ENCODE measurements at regions of chr12 and their contacts with region 1.

Region 1: DNA sequence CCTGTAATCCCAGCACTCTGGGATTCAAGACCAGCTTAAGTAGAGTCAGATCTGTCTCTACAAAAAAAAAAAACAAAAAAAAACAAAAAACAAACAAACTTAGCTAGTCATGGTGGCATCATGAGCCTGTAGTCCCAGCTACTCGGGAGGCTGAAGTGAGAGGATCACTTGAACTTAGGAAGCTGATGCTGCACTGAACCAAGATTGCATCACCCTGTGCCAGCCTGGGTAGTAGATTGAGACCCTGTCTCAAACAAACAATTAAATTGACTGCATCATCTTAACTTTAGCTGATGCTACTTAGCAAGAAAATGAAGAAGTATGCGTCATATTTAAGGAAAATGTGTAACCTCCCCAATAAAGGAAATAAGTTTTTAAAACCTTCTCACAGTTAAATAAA is 136.6 kb upstream of the ATXN7L3B start:
- DNase-seq: peak; percentile 40
- ATAC-seq: no peak
- H3K4me3 ChIP-seq: no peak overlapping the region
- H3K27ac ChIP-seq: no peak overlapping the region
- H3K4me1 ChIP-seq: peaks cover 10% of the 10 kb centered on the region
- H3K27me3 ChIP-seq: no peaks in the 10 kb centered on the region
- CTCF ChIP-seq: no peak

Region 2: DNA sequence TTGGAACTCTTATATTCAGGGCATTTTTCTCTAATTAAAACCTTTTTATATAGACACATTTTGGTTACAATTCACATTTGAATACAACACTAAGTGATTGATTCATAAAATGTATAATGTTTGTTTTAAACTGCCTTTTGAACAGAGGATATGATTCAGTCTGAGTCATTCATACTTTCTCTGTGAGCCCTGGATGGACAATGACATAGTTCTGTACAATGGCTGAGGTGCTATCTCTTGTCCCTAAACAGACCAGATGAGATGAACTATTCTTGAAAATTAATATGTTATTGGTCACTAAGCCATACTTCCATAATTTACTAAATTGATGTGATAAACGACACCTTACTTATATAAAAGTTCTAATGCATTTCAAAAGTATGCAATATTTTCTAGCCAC is 63.1 kb before region 1 on chr12:
- CTCF ChIA-PET with region 1: no interaction called
- POLR2A ChIA-PET with region 1: no interaction called
- intact Hi-C with region 1: loop called (anchors 5 kb)
- DNase-seq: peak; percentile 89
- ATAC-seq: peak; percentile 97
- H3K4me3 ChIP-seq: no peak overlapping the region
- H3K27ac ChIP-seq: peak overlapping the region; percentile 32
- H3K4me1 ChIP-seq: peaks cover 28% of the 10 kb centered on the region
- H3K27me3 ChIP-seq: no peaks in the 10 kb centered on the region
- CTCF ChIP-seq: no peak

Region 3: DNA sequence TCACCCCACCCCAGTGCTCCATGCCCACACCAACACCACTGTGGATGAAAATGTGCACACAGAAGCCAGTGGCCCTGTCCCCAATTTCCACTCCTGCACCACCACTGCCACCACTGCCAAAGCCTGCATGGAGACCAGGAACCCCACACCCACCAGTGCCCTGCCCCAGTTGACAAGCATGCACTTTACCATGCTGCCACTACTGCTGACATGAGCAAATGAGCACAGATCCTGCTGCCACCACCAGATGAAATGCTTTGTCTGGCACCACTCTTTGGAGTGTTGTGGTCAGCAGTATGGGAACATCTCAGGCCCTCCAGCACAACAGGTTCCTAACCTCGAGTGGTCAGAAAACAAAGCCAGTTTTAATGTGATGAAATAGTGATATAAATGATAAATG is 240.7 kb after region 1 on chr12:
- CTCF ChIA-PET with region 1: no interaction called
- POLR2A ChIA-PET with region 1: interaction called, 17 read pairs
- intact Hi-C with region 1: no loop called
- DNase-seq: no peak
- ATAC-seq: no peak
- H3K4me3 ChIP-seq: no peak overlapping the region
- H3K27ac ChIP-seq: no peak overlapping the region
- H3K4me1 ChIP-seq: no peaks in the 10 kb centered on the region
- H3K27me3 ChIP-seq: no peaks in the 10 kb centered on the region
- CTCF ChIP-seq: no peak

Region 4: DNA sequence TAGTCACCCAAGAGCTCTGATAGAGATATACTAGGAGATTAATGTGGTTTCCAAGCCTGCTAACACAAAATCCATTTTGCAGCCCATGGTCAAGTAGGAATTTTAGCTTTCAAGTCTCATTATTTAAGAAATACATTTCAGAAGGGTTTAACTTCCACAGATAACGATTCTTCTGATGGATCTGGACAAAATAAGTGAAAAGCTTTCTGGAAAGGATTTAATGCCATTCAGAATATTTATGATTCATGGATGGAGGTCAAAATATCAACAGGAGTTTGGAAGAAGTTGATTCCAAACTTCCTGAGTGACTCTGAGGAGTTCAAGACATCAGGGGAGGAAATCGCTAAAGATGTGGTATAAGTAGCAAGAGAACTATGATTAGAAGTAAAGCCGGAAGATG is 351.2 kb after region 1 on chr12:
- CTCF ChIA-PET with region 1: no interaction called
- POLR2A ChIA-PET with region 1: no interaction called
- intact Hi-C with region 1: no loop called
- DNase-seq: no peak
- ATAC-seq: no peak
- H3K4me3 ChIP-seq: no peak overlapping the region
- H3K27ac ChIP-seq: no peak overlapping the region
- H3K4me1 ChIP-seq: no peaks in the 10 kb centered on the region
- H3K27me3 ChIP-seq: no peaks in the 10 kb centered on the region
- CTCF ChIP-seq: no peak